Caco-2 (cell line): ENCODE measurements at regions of chr5 and their contacts with region 1.

Region 1: DNA sequence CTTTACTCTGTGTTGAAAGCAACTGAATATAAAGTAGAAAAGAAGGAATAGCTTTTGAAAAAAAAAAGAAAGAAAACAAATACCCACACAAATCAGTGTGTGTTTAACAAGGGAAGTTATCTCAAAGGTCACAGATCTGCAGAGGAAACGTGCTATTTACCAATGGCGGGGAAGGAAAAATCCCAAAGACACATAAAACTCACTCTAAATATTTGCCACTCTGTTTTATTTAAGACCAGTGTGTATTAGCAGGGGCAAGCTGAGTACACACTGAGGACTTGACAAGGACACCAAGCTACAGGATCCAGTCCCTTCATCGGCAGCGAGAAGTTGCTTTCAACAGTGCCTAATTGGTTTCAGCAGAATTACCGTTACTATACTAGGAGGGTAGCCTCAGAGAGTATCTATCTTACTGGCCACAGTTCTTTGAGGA is 252.5 kb downstream of the DEPDC1B start:
- DNase-seq: peak; percentile 47 to 53
- H3K4me3 ChIP-seq: no peak overlapping the region
- H3K4me3 Mint-ChIP-seq: no peak overlapping the region
- H3K27ac Mint-ChIP-seq: no peak overlapping the region
- H3K4me1 ChIP-seq: peaks cover 6% of the 10 kb centered on the region
- H3K4me1 Mint-ChIP-seq: peaks cover 16% of the 10 kb centered on the region
- H3K27me3 ChIP-seq: no peaks in the 10 kb centered on the region
- H3K27me3 Mint-ChIP-seq: peaks cover 9% of the 10 kb centered on the region
- CTCF ChIP-seq: no peak

Region 2: GRCh38 chr5:60382716-60383115 is 64.8 kb before region 1 on chr5:
- CTCF ChIA-PET with region 1: no interaction called
- POLR2A ChIA-PET with region 1: no interaction called
- intact Hi-C with region 1: no loop called
- DNase-seq: peak in 1 of 2 experiments; percentile 18
- H3K4me3 ChIP-seq: no peak overlapping the region
- H3K4me3 Mint-ChIP-seq: no peak overlapping the region
- H3K27ac Mint-ChIP-seq: no peak overlapping the region
- H3K4me1 ChIP-seq: no peaks in the 10 kb centered on the region
- H3K4me1 Mint-ChIP-seq: no peaks in the 10 kb centered on the region
- H3K27me3 ChIP-seq: no peaks in the 10 kb centered on the region
- H3K27me3 Mint-ChIP-seq: peaks cover 12% of the 10 kb centered on the region
- CTCF ChIP-seq: peak; percentile 39

Region 3: GRCh38 chr5:60463179-60463868 is 15.8 kb after region 1 on chr5:
- CTCF ChIA-PET with region 1: no interaction called
- POLR2A ChIA-PET with region 1: no interaction called
- intact Hi-C with region 1: loop called (anchors 1 kb)
- DNase-seq: peak; percentile 45 to 70
- H3K4me3 ChIP-seq: no peak overlapping the region
- H3K4me3 Mint-ChIP-seq: peak overlapping the region; percentile 9
- H3K27ac Mint-ChIP-seq: peak overlapping the region; percentile 23
- H3K4me1 ChIP-seq: peaks cover 16% of the 10 kb centered on the region
- H3K4me1 Mint-ChIP-seq: peaks cover 13% of the 10 kb centered on the region
- H3K27me3 ChIP-seq: no peaks in the 10 kb centered on the region
- H3K27me3 Mint-ChIP-seq: no peaks in the 10 kb centered on the region
- CTCF ChIP-seq: no peak

Region 4: DNA sequence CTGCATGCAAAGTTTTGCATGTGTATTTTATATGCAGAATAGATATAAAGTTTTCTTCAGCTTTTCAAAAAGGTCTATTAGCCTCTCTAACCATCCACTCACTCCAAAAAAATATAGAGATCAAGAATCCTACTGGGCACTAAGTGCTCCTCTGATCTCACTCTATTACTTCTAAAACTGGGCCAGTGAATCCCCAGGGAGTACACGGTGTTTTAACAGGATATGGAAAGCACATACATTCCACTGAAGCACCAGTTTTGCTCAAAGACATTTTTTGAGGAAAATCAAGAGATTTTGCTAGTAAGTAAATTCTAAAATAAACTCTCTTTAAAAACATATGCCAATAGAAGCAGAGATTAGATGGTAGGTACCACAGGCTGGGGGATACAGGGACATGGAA is 157.3 kb after region 1 on chr5:
- CTCF ChIA-PET with region 1: no interaction called
- POLR2A ChIA-PET with region 1: no interaction called
- intact Hi-C with region 1: no loop called
- DNase-seq: no peak
- H3K4me3 ChIP-seq: no peak overlapping the region
- H3K4me3 Mint-ChIP-seq: no peak overlapping the region
- H3K27ac Mint-ChIP-seq: no peak overlapping the region
- H3K4me1 ChIP-seq: no peaks in the 10 kb centered on the region
- H3K4me1 Mint-ChIP-seq: no peaks in the 10 kb centered on the region
- H3K27me3 ChIP-seq: no peaks in the 10 kb centered on the region
- H3K27me3 Mint-ChIP-seq: no peaks in the 10 kb centered on the region
- CTCF ChIP-seq: no peak